ENCODE measurements at regions of chr1 and their contacts with region 1.

Region 1: GRCh38 chr1:160031365-160032164 is at the start of gene PIGM:
- DNase-seq: peak; percentile 97
- H3K4me3 Mint-ChIP-seq: peak within 1 kb of the TSS; percentile 96
- H3K27ac Mint-ChIP-seq: peak within 1 kb of the TSS; percentile 89
- H3K4me1 Mint-ChIP-seq: peaks cover 33% of the 10 kb centered on the region
- H3K27me3 Mint-ChIP-seq: no peaks in the 10 kb centered on the region
- total RNA-seq, gene PIGM: 4.4 to 4.7 TPM

Region 2: DNA sequence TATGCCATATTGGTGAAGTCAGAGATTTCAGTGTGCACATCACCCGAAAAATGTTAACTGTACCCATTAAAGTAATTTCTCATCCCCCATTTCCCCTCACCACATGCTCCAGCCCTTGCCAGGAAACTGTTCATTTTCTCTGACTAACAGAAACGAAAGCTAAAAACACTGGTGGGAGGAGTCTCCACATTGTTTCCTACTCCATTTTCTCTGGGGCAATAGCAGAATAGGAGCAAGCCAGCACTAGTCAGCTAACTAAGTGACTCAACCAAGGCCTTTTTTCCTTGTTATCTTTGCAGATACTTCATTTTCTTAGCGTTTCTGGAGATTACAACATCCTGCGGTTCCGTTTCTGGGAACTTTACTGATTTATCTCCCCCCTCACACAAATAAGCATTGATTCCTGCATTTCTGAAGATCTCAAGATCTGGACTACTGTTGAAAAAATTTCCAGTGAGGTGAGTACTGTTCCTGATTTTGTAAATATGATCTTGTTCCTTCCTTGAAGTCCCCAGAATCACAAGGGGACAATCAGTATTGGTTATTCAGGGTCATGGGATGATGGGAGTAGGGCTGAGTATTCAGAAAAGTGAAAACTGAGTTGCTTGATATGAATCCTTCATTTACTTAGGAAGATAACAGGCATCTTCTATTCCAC is 1021.7 kb before region 1 on chr1 and contains the start of gene IFI16:
- CTCF ChIA-PET with region 1: no interaction called
- POLR2A ChIA-PET with region 1: no interaction called
- intact Hi-C with region 1: loop called (anchors 5 kb)
- DNase-seq: peak; percentile 77
- H3K4me3 Mint-ChIP-seq: peak within 1 kb of the TSS; percentile 90
- H3K27ac Mint-ChIP-seq: peak within 1 kb of the TSS; percentile 100
- H3K4me1 Mint-ChIP-seq: peaks cover 51% of the 10 kb centered on the region
- H3K27me3 Mint-ChIP-seq: no peaks in the 10 kb centered on the region
- total RNA-seq, gene IFI16: 215 to 220 TPM

Region 3: DNA sequence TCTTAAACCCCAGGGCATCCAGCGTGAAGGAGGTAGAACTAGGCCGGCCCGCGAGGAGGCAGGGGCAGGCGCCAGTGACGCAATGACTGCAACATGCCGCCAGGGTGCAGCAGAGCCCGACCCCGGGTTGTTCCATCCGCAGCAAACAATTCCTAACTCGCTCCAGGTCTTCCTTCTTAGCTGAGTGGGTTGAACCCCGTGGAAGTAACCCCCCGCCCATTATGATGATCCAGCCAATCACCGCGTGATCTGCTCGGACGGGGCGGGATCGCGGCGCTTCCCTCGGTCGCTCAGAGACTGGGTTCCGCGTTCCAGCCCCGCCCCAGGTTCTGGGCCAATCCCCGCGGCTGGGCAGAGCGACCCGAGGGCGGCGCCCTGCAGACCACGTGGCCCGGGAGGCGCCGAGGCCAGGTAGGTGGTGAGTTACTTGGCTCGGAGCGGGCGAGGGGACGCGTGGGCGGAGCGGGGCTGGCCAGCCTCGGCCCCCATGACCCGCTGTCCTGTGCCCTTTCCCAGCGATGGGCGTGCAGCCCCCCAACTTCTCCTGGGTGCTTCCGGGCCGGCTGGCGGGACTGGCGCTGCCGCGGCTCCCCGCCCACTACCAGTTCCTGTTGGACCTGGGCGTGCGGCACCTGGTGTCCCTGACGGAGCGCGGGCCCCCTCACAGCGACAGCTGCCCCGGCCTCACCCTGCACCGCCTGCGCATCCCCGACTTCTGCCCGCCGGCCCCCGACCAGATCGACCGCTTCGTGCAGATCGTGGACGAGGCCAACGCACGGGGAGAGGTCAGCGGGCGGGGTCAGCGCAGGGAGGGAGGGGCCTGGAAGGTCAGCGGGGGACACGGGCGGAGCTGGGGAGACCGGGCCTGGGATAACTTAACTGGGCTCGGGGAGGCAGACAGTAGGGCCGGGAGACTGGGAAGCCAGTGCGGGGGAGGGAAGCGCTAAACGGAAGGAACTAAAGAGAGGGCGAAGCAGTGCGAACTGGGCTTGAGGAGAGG is 250.7 kb before region 1 on chr1 and contains the start of gene DUSP23:
- CTCF ChIA-PET with region 1: interaction called, 3 read pairs
- POLR2A ChIA-PET with region 1: no interaction called
- intact Hi-C with region 1: loop called (anchors 1 kb)
- DNase-seq: peak; percentile 98
- H3K4me3 Mint-ChIP-seq: peak within 1 kb of the TSS; percentile 78
- H3K27ac Mint-ChIP-seq: peak within 1 kb of the TSS; percentile 25
- H3K4me1 Mint-ChIP-seq: peaks cover 5% of the 10 kb centered on the region
- H3K27me3 Mint-ChIP-seq: no peaks in the 10 kb centered on the region
- total RNA-seq, gene DUSP23: 26.9 to 28.3 TPM

Region 4: GRCh38 chr1:159970932-159971342 is 60.6 kb before region 1 on chr1:
- CTCF ChIA-PET with region 1: no interaction called
- POLR2A ChIA-PET with region 1: no interaction called
- intact Hi-C with region 1: no loop called
- DNase-seq: no peak
- H3K4me3 Mint-ChIP-seq: no peak overlapping the region
- H3K27ac Mint-ChIP-seq: no peak overlapping the region
- H3K4me1 Mint-ChIP-seq: no peaks in the 10 kb centered on the region
- H3K27me3 Mint-ChIP-seq: peaks cover 23% of the 10 kb centered on the region

Region 5: GRCh38 chr1:160046494-160047110 is 15.0 kb after region 1 on chr1:
- CTCF ChIA-PET with region 1: interaction called, 39 read pairs
- POLR2A ChIA-PET with region 1: interaction called, 11 read pairs
- intact Hi-C with region 1: no loop called
- DNase-seq: peak; percentile 61
- H3K4me3 Mint-ChIP-seq: peak overlapping the region; percentile 50
- H3K27ac Mint-ChIP-seq: no peak overlapping the region
- H3K4me1 Mint-ChIP-seq: peaks cover 9% of the 10 kb centered on the region
- H3K27me3 Mint-ChIP-seq: peaks cover 15% of the 10 kb centered on the region

Region 6: GRCh38 chr1:160078512-160079195 is 47.1 kb after region 1 on chr1:
- CTCF ChIA-PET with region 1: interaction called, 615 read pairs
- POLR2A ChIA-PET with region 1: no interaction called
- intact Hi-C with region 1: loop called (anchors 5 kb)
- DNase-seq: peak; percentile 84
- H3K4me3 Mint-ChIP-seq: no peak overlapping the region
- H3K27ac Mint-ChIP-seq: no peak overlapping the region
- H3K4me1 Mint-ChIP-seq: peaks cover 12% of the 10 kb centered on the region
- H3K27me3 Mint-ChIP-seq: peaks cover 51% of the 10 kb centered on the region

Region 7: DNA sequence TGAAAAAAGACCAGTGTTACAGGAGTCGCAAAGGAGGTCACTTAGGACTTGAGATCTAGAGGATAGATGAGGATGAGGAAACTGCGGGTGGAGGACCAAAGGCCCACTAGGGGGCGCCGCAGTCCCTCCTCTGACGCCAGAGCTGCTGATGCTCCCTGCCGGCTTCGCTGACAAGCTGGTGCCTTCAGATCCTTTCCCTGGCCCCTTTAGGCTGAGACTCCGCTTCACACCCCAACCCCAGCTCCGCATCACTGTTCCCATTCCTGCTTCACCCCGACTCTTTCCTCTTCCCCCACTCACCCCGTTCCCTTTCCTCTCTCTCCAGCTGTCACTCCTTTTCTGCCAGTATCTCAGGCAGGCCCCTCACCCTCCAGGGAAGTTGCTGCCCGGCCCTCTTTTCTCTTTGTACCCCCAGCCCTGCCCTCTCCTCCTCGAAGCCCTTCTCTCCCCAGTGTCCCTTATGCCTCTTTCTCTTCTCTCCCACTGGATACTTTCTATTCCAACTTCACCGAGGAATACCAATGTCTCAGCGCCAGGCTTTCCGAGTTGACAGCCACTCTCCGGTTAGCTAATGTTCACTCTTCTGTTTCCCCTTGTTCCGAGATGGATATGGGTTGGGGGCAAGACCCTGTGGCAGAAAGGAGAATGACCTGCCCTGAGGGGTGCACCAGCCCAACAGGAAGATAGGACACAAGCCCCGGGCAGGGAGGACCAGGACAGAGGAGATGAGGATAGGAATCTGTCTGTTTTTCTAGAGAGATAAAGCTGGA is 54.3 kb after region 1 on chr1:
- CTCF ChIA-PET with region 1: interaction called, 615 read pairs
- POLR2A ChIA-PET with region 1: no interaction called
- intact Hi-C with region 1: loop called (anchors 5 kb)
- DNase-seq: peak; percentile 87
- H3K4me3 Mint-ChIP-seq: no peak overlapping the region
- H3K27ac Mint-ChIP-seq: no peak overlapping the region
- H3K4me1 Mint-ChIP-seq: peaks cover 13% of the 10 kb centered on the region
- H3K27me3 Mint-ChIP-seq: peaks cover 21% of the 10 kb centered on the region